OCI-LY7 (cell line): ENCODE measurements at regions of chr17 and their contacts with region 1.

Region 1: DNA sequence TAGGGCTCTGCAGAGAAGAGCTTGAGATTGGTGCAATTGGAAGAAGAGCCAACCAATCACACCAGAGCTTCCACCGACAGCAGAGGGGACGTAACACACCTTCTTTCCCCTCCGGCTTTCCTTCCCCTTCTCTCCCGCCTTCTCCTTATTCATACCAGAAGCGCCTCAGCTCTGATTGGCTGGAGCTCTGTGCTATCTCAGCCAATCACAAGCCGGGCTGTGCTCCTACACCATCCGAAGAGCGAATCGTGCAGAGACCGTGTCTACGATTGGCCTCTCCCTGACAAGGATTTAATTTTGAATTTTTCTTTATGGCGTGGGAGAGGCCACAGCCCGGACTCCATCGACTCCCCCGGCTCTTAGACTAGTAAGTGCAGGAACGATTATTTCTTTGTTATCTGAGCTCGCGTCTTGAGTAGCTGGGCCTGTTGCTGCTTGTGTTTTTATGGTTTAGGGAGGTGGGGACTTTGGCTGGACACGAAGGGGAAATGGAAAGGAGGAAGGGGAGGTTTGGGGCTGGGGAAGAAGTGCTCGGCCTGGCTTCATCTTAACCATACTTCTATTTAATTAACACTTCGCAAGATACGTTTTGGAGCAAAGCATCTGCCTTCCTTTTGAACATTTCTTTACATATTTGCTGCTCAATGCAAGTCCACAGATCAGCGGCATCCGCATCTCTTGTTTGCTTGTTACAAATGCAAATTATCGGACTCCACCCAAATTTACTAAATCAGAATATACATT is at the start of gene PRR11:
- DNase-seq: peak; percentile 99
- H3K4me3 ChIP-seq: peak within 1 kb of the TSS; percentile 94
- H3K27ac ChIP-seq: peak within 1 kb of the TSS; percentile 91
- H3K4me1 ChIP-seq: peaks cover 68% of the 10 kb centered on the region
- CTCF ChIP-seq: no peak
- total RNA-seq, gene PRR11: 21.9 and 27.3 TPM in 2 replicates

Region 2: GRCh38 chr17:59106463-59107305 is 48.9 kb before region 1 on chr17 and contains the start of gene TRIM37:
- CTCF ChIA-PET with region 1: no interaction called
- POLR2A ChIA-PET with region 1: interaction called, 4 read pairs
- intact Hi-C with region 1: loop called (anchors 1 kb)
- DNase-seq: peak; percentile 100
- H3K4me3 ChIP-seq: peak within 1 kb of the TSS; percentile 91
- H3K27ac ChIP-seq: peak within 1 kb of the TSS; percentile 84
- H3K4me1 ChIP-seq: peaks cover 30% of the 10 kb centered on the region
- CTCF ChIP-seq: 0 out of 2 replicates have a peak, but pooled peaks have one; percentile 25
- total RNA-seq, gene TRIM37: 32.7 and 35.4 TPM in 2 replicates

Region 3: GRCh38 chr17:59892924-59893676 is 737.5 kb after region 1 on chr17 and contains the starts of genes RPS6KB1 and TUBD1:
- CTCF ChIA-PET with region 1: no interaction called
- POLR2A ChIA-PET with region 1: no interaction called
- intact Hi-C with region 1: loop called (anchors 5 kb)
- DNase-seq: peak; percentile 99
- H3K4me3 ChIP-seq: peak within 1 kb of the TSS; percentile 78
- H3K27ac ChIP-seq: peak within 1 kb of the TSS; percentile 70
- H3K4me1 ChIP-seq: peaks cover 13% of the 10 kb centered on the region
- CTCF ChIP-seq: no peak
- total RNA-seq, gene RPS6KB1: 31.1 and 43.7 TPM in 2 replicates
- total RNA-seq, gene TUBD1: 8.6 and 11.5 TPM in 2 replicates